ENCODE measurements at regions of chr6 and their contacts with region 1.

Region 1: DNA sequence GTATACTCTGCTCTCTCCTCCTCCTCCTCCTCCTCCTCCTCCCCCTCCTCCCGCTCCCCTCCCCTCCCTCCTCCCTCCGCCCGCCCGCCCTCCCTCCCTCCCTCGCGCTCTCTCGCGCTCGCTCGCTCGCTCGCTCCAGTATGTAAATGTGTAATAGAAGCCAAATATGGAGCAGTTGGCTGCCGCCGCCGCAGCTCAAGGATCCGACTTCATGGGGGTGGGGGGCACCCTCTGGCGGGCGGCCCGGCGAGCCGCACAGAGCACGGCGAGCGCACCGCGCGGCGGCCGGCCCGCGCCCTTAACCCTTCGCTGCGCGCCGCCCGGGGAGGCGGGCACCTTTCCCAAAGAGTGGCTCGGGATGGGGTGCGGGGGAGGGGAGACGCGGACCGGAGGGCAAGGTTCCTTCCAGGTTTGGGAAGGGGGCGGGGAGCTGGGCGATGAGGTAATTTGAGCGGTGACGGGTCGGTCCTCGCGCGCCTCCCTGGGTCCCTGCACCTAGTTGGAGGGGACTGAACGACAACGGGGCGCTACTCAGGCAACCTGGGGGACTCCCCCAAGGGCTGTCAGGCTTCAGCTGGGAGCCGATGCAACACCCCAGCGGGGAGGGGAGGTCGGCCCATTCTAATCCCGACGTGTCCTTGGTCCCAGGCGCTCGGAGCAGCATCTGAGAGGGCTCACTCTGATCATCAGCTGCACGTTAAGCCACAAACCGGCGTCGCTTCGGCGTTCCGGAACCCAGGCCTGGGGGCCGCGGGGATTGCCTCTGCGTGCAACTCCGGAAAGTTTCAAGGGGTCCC is 409 bp upstream of the ATXN1 start:
- DNase-seq: peak; percentile 70 to 94 (median 80)
- ATAC-seq: peak; percentile 58
- H3K4me3 ChIP-seq: peak overlapping the region; percentile 72
- H3K4me3 Mint-ChIP-seq: peak overlapping the region; percentile 99
- H3K27ac ChIP-seq: peak overlapping the region; percentile 97 to 98
- H3K27ac Mint-ChIP-seq: peak overlapping the region; percentile 98
- H3K4me1 ChIP-seq: peaks cover 23% of the 10 kb centered on the region
- H3K4me1 Mint-ChIP-seq: peaks cover 65% of the 10 kb centered on the region
- H3K27me3 ChIP-seq: no peaks in the 10 kb centered on the region
- H3K27me3 Mint-ChIP-seq: peaks cover 4% of the 10 kb centered on the region
- CTCF ChIP-seq: peak; percentile 5

Region 2: GRCh38 chr6:16319813-16320532 is 441.7 kb before region 1 on chr6:
- CTCF ChIA-PET with region 1: interaction called, 7 read pairs
- POLR2A ChIA-PET with region 1: interaction called, 17 read pairs
- intact Hi-C with region 1: loop called in 1 of 2 experiments (anchors 1 kb)
- DNase-seq: peak; percentile 41 to 89 (median 62)
- ATAC-seq: peak; percentile 55
- H3K4me3 ChIP-seq: peak overlapping the region; percentile 40
- H3K4me3 Mint-ChIP-seq: peak overlapping the region; percentile 70
- H3K27ac ChIP-seq: peak overlapping the region; percentile 63 to 93
- H3K27ac Mint-ChIP-seq: peak overlapping the region; percentile 94
- H3K4me1 ChIP-seq: peaks cover 82% of the 10 kb centered on the region
- H3K4me1 Mint-ChIP-seq: peaks cover 78% of the 10 kb centered on the region
- H3K27me3 ChIP-seq: no peaks in the 10 kb centered on the region
- H3K27me3 Mint-ChIP-seq: no peaks in the 10 kb centered on the region
- CTCF ChIP-seq: no peak

Region 3: DNA sequence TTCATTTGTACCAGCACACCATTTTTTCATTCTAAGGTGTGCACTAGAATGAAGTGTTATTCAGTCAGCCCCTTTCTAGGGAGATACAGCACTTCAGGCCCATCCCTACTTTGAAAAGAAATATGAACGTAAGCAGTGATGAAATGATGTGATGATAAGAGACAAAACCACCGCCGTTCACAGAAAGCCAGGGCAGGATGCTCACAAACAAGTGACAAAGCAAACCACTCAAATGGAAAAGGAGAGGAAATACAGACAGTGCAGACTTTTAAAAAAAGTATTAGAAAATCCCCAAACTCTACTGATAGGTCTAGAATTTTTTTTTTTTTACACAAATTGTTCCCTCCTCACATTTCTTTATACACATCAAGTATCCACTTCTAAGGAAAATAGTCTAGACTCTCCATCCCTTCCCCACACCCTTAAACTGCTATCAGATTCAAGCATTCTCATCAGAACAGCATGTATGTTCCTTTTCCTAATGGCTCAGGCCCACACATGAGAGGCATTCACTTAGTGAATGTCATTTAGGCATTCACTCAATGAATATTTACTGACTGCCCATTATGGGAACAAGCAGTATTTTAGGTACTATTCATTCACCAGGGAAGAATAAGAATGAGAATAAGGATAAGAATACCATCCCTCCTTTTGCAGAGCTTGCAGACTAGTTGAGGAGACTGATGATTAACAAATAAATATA is 279.8 kb before region 1 on chr6:
- CTCF ChIA-PET with region 1: interaction called, 3 read pairs
- POLR2A ChIA-PET with region 1: no interaction called
- intact Hi-C with region 1: loop called in 1 of 2 experiments (anchors 5 kb)
- DNase-seq: peak; percentile 24 to 93 (median 52)
- ATAC-seq: peak; percentile 82
- H3K4me3 ChIP-seq: no peak overlapping the region
- H3K4me3 Mint-ChIP-seq: peak overlapping the region; percentile 21
- H3K27ac ChIP-seq: peak overlapping the region; percentile 71 to 75
- H3K27ac Mint-ChIP-seq: peak overlapping the region; percentile 88
- H3K4me1 ChIP-seq: peaks cover 60% of the 10 kb centered on the region
- H3K4me1 Mint-ChIP-seq: peaks cover 73% of the 10 kb centered on the region
- H3K27me3 ChIP-seq: no peaks in the 10 kb centered on the region
- H3K27me3 Mint-ChIP-seq: no peaks in the 10 kb centered on the region
- CTCF ChIP-seq: no peak

Region 4: DNA sequence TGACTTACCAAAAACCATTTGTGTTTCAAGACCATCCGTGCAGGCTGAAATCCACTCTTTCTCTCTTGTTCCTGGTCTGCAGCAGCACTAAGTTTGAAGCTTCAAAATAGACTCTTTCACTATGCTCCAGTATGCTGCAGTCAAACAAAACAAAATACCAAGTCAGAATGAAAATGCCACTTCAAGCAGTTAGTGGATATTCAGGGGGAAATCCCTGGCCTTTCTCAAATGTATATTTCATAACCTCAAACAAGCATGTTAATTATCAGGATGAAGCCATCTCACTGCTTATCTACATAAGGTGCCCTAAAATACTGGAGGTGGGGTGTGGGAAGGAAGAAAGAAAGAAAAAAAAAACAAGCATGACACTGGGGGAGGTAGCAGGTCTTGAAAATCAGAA is 103.9 kb before region 1 on chr6:
- CTCF ChIA-PET with region 1: interaction called, 7 read pairs
- POLR2A ChIA-PET with region 1: interaction called, 11 read pairs
- intact Hi-C with region 1: loop called in 1 of 2 experiments (anchors 5 kb)
- DNase-seq: peak in 3 of 14 experiments; percentile 40 to 55 (median 52)
- ATAC-seq: no peak
- H3K4me3 ChIP-seq: no peak overlapping the region
- H3K4me3 Mint-ChIP-seq: peak overlapping the region; percentile 69
- H3K27ac ChIP-seq: peak overlapping the region in 1 of 2 donors; percentile 33
- H3K27ac Mint-ChIP-seq: peak overlapping the region; percentile 78
- H3K4me1 ChIP-seq: peaks cover 36% of the 10 kb centered on the region
- H3K4me1 Mint-ChIP-seq: peaks cover 66% of the 10 kb centered on the region
- H3K27me3 ChIP-seq: no peaks in the 10 kb centered on the region
- H3K27me3 Mint-ChIP-seq: no peaks in the 10 kb centered on the region
- CTCF ChIP-seq: no peak

Region 5: GRCh38 chr6:16712931-16713484 is 48.7 kb before region 1 on chr6:
- CTCF ChIA-PET with region 1: interaction called, 5 read pairs
- POLR2A ChIA-PET with region 1: interaction called, 14 read pairs
- intact Hi-C with region 1: loop called in 1 of 2 experiments (anchors 5 kb)
- DNase-seq: peak in 3 of 14 experiments; percentile 57 to 69 (median 61)
- ATAC-seq: peak; percentile 37
- H3K4me3 ChIP-seq: peak overlapping the region; percentile 36
- H3K4me3 Mint-ChIP-seq: peak overlapping the region; percentile 70
- H3K27ac ChIP-seq: peak overlapping the region; percentile 25 to 54
- H3K27ac Mint-ChIP-seq: peak overlapping the region; percentile 82
- H3K4me1 ChIP-seq: peaks cover 24% of the 10 kb centered on the region
- H3K4me1 Mint-ChIP-seq: peaks cover 32% of the 10 kb centered on the region
- H3K27me3 ChIP-seq: no peaks in the 10 kb centered on the region
- H3K27me3 Mint-ChIP-seq: no peaks in the 10 kb centered on the region
- CTCF ChIP-seq: peak; percentile 11

Region 6: DNA sequence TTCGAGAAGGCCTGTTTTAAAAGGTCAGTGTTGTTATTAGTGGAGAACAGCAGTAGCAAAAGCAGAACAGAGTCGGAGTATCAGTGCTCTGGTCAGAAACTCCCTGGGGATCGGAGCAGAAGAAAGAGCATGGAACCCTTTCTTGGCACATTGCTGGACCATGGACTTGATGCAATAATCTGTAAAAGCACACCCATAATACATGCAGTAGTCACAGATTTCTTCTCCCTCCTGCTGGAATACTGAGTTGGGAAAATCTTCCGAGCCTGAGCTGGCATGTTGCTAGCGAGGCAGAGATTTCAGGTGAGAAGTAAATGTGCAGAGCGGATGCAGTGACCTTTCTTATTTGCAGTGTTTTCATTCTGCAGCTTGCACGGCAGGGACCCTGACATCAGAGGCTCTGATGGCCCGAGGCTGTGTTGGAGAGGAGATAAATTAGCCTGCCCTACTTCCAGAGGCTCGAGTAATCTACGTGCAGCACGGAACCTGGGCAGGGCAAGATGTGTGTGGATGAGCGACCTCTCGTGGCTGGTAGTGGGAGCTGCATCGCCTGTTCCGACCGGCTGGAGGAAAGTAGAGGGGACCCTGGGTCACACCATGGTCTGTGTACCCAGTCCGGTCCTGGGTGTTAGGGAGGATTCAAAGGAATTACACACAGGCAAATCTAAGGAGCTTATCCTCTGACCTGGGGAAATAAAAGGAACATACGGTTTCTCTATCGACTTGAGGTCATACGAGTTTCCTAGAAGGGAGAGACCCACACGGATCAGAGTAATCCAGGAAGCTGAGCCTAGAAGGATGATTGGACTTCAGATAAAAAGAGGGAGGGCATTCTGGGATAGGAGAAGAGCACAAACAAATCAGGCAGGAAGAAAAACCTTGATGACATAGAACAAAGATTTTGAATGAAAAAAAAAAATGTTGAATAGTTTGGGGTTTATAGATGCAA is 203.2 kb after region 1 on chr6:
- CTCF ChIA-PET with region 1: interaction called, 6 read pairs
- POLR2A ChIA-PET with region 1: no interaction called
- intact Hi-C with region 1: loop called (anchors 2 to 5 kb)
- DNase-seq: peak; percentile 28 to 77 (median 47)
- ATAC-seq: peak; percentile 94
- H3K4me3 ChIP-seq: no peak overlapping the region
- H3K4me3 Mint-ChIP-seq: no peak overlapping the region
- H3K27ac ChIP-seq: no peak overlapping the region
- H3K27ac Mint-ChIP-seq: no peak overlapping the region
- H3K4me1 ChIP-seq: peaks cover 5% of the 10 kb centered on the region
- H3K4me1 Mint-ChIP-seq: peaks cover 5% of the 10 kb centered on the region
- H3K27me3 ChIP-seq: peaks cover 3 to 5% of the 10 kb centered on the region in 2 experiments
- H3K27me3 Mint-ChIP-seq: peaks cover 7% of the 10 kb centered on the region
- CTCF ChIP-seq: peak; percentile 66

Region 7: DNA sequence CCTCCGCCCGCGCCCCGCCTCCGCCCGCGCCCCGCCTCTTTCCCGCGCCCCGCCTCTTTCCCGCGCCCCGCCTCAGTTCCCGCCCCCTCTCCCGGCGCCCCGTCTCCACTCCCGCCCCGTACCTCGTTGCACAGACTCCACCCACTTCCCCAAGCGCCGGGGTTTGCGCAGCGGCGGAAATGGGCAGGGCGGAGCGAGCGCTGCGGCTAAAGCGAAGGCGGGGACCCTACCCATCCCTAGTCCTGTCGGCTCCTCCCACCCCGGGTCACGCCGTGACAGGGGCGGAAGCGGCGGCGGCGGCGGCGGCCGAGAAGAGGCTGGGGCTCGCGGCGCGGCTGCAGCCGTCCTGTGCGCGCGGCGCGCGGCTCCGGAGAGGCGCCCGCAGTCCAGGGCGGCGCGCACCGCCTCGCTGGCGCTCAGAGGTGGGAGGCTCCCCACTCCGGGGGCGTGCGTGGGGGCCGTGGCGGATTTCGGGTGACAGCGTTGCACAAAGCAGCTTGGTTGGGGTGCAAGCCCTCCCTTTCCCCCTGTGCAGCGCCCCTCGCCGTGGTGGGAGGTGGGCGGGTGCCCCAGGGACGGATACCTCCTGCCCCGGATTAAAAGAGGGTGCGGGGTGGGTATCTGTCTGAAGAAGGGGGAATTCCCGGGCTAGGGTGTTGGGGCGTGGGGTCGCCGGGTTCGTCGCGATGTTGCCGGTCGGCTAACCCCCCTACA is 1393.6 kb after region 1 on chr6 and contains the start of gene KDM1B:
- CTCF ChIA-PET with region 1: no interaction called
- POLR2A ChIA-PET with region 1: no interaction called
- intact Hi-C with region 1: loop called in 1 of 2 experiments (anchors 10 kb)
- DNase-seq: peak; percentile 97 to 99 (median 98)
- ATAC-seq: peak; percentile 92
- H3K4me3 ChIP-seq: peak within 1 kb of the TSS; percentile 99
- H3K4me3 Mint-ChIP-seq: peak within 1 kb of the TSS; percentile 98
- H3K27ac ChIP-seq: peak within 1 kb of the TSS; percentile 88 to 92
- H3K27ac Mint-ChIP-seq: peak within 1 kb of the TSS; percentile 95
- H3K4me1 ChIP-seq: peaks cover 18% of the 10 kb centered on the region
- H3K4me1 Mint-ChIP-seq: peaks cover 32% of the 10 kb centered on the region
- H3K27me3 ChIP-seq: no peaks in the 10 kb centered on the region
- H3K27me3 Mint-ChIP-seq: no peaks in the 10 kb centered on the region
- CTCF ChIP-seq: no peak
- total RNA-seq, gene KDM1B: 4.4 to 6.0 TPM